ENCODE measurements at regions of chr7 and their contacts with region 1.

Region 1: DNA sequence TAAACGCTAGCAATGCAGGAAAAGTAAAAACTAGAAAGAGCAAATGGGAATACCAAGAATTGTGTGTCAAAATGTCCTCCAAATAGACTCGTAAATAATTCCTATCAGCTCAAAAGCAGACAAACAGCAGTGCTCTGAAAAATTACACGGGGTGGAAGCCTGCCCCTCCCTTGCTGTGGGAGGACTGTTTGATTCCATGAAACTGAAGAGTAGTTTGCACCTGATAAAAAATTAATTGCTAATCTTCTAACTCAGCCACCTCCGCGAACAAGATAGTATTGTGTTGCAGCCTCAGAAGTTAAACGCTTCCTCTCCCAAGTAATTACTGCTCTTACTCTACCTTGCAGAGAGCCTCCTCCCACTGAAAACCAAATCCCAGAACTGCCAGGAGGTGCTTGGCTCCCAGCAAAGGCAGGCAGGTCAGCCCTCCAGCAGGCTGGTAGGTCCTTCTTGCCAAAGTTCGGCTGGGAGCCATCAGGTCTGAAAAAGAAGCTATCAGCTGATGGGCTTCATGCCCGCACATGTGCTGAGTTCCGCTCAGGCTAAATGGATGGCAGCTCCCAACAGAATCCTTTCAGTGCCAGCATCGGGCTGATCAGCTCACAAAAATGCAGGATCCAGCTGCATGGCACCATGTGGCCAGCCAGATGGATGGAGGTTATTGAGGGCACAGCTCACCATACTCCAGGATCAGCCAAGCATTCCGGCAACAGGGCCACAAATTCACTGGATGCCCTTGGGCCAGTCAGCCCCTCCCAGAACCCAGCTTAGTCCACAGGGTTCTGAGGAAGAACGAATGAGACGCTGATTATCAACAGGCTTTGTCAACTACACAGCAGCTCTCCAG is 37.1 kb downstream of the MAD1L1 start:
- DNase-seq: no peak
- H3K4me3 Mint-ChIP-seq: no peak overlapping the region
- H3K27ac Mint-ChIP-seq: no peak overlapping the region
- H3K4me1 Mint-ChIP-seq: no peaks in the 10 kb centered on the region
- H3K27me3 Mint-ChIP-seq: no peaks in the 10 kb centered on the region

Region 2: GRCh38 chr7:2112261-2113198 is 83.1 kb before region 1 on chr7:
- CTCF ChIA-PET with region 1: no interaction called
- POLR2A ChIA-PET with region 1: no interaction called
- intact Hi-C with region 1: no loop called
- DNase-seq: no peak
- H3K4me3 Mint-ChIP-seq: no peak overlapping the region
- H3K27ac Mint-ChIP-seq: peak overlapping the region; percentile 14
- H3K4me1 Mint-ChIP-seq: peaks cover 31% of the 10 kb centered on the region
- H3K27me3 Mint-ChIP-seq: no peaks in the 10 kb centered on the region

Region 3: DNA sequence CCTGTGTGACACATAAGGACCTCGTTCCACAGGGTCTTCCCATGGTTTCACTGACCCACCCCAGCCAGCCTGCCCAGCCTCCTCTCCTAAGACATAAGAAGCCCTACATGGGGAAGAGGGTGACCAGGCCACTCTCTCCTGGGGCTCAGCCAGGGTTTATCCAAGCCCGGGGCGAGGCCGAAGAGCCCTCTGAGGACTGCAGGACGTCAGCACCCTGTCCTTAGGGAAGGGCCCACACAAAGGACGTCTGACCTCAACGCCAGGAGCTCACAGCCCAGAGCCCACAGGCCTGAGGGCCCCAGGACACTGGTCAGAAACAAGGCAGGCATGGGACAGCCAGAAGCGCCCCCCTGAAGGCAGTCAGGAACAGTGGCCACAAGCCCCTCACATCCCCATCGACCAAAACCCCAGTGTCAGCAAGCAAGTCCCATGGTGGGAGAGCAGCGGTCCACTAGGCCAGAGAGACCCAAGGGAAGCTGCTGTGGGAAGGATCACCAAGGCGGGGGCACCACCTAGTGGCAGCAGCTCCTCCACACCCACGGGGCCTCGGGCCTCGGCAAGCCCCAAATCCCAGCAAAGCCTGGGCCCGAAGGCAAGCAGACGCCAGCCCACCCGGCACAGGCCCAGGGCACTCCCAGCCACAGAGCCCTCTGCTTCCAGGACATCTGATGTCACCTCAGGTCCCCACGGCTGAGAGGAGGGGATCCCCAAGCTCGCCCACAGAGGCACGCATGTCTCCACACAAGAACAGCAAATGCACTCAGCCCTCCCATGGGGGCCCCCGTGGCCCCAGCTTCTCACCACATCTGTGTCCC is 13.7 kb after region 1 on chr7:
- CTCF ChIA-PET with region 1: interaction called, 12 read pairs
- POLR2A ChIA-PET with region 1: no interaction called
- intact Hi-C with region 1: no loop called
- DNase-seq: peak; percentile 58
- H3K4me3 Mint-ChIP-seq: no peak overlapping the region
- H3K27ac Mint-ChIP-seq: no peak overlapping the region
- H3K4me1 Mint-ChIP-seq: no peaks in the 10 kb centered on the region
- H3K27me3 Mint-ChIP-seq: no peaks in the 10 kb centered on the region